ENCODE measurements at regions of chr9 and their contacts with region 1.

Region 1: DNA sequence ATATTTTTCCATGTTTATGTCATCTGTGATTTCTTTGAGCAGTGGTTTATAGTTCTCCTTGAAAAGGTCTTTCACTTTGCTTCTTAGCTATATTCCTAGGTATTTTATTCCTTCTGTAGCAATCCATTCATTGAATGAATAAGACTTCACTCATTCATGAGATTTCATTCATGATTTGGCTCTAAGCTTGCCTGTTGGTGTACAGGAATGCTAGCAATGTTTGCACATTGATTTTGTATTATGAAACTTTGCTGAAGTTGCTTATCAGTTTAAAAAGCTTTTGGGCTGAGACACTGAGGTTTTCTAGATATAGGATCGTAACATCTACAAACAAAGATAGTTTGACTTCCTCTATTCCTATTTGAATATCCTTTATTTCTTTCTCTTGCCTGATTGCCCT is 15.9 kb downstream of the RLN2 start:
- DNase-seq: no peak
- ATAC-seq: no peak
- H3K4me3 ChIP-seq: no peak overlapping the region
- H3K27ac ChIP-seq: no peak overlapping the region
- H3K4me1 ChIP-seq: no peaks in the 10 kb centered on the region
- H3K27me3 ChIP-seq: no peaks in the 10 kb centered on the region
- CTCF ChIP-seq: no peak

Region 2: GRCh38 chr9:5352637-5353455 is 64.3 kb after region 1 on chr9:
- intact Hi-C with region 1: loop called in 1 of 2 experiments (anchors 10 kb)
- DNase-seq: no peak
- ATAC-seq: no peak
- H3K4me3 ChIP-seq: no peak overlapping the region
- H3K27ac ChIP-seq: no peak overlapping the region
- H3K4me1 ChIP-seq: no peaks in the 10 kb centered on the region
- H3K27me3 ChIP-seq: no peaks in the 10 kb centered on the region
- CTCF ChIP-seq: no peak